ENCODE measurements at regions of chr12 and their contacts with region 1.

Region 1: GRCh38 chr12:70427614-70428013 is 61.5 kb downstream of the KCNMB4 start:
- DNase-seq: no peak
- ATAC-seq: no peak
- H3K4me3 Mint-ChIP-seq: no peak overlapping the region
- H3K27ac Mint-ChIP-seq: no peak overlapping the region
- H3K4me1 Mint-ChIP-seq: no peaks in the 10 kb centered on the region
- H3K27me3 Mint-ChIP-seq: no peaks in the 10 kb centered on the region
- CTCF ChIP-seq: no peak

Region 2: GRCh38 chr12:70443062-70443673 is 15.6 kb after region 1 on chr12:
- CTCF ChIA-PET with region 1: no interaction called
- POLR2A ChIA-PET with region 1: no interaction called
- intact Hi-C with region 1: loop called (anchors 2 kb)
- DNase-seq: no peak
- ATAC-seq: no peak
- H3K4me3 Mint-ChIP-seq: no peak overlapping the region
- H3K27ac Mint-ChIP-seq: no peak overlapping the region
- H3K4me1 Mint-ChIP-seq: no peaks in the 10 kb centered on the region
- H3K27me3 Mint-ChIP-seq: no peaks in the 10 kb centered on the region
- CTCF ChIP-seq: no peak

Measured in activated B cell treated with CpG ODN at 0.5 μM for 24 hours (primary cell).